ENCODE measurements at regions of chr2 and their contacts with region 1.

Region 1: DNA sequence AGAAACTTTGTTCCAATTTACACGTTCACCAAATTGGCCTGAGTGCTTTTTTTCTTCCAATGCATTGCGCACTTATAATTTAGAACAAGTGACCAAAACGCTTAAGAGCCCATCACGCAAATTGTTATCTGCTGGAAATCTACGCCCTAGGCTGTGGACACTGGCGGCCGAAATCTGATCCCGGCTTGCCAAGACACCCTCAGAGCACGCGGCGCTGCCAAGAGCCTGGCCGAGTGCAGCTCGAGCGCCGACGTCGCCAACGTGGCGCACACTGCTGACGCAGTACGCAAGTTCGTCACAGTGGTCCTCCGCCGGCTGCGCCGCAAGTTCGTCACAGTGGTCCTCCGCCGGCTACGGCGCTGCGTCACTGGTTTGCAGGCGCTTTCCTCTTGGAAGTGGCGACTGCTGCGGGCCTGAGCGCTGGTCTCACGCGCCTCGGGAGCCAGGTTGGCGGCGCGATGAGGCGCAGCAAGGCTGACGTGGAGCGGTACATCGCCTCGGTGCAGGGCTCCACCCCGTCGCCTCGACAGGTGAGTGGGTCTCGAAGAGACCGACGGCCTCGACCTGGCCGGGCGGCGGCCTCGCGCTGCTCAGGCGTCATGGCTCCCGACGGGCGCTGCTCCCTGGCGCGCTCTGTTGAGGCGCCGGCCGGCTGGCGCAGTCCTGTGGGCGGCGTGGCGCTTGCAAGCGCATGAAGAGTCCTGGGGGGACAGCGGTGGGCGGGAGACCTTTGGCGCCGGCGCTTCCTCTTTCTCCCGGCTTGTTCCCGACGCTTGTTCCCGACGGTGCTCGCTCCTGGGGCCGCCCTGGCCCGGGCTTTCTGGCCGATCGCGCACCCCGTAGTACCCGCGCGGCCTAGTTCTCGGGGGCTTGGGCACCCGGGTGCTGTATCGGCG is at the start of gene RANBP2:
- DNase-seq: peak; percentile 84 to 99 (median 92)
- ATAC-seq: peak; percentile 88
- H3K4me3 ChIP-seq: peak within 1 kb of the TSS; percentile 69
- H3K4me3 Mint-ChIP-seq: peak within 1 kb of the TSS; percentile 98
- H3K27ac ChIP-seq: peak within 1 kb of the TSS; percentile 87 to 88
- H3K27ac Mint-ChIP-seq: peak within 1 kb of the TSS; percentile 98
- H3K4me1 ChIP-seq: peaks cover 22% of the 10 kb centered on the region
- H3K4me1 Mint-ChIP-seq: peaks cover 26% of the 10 kb centered on the region
- H3K27me3 ChIP-seq: no peaks in the 10 kb centered on the region
- H3K27me3 Mint-ChIP-seq: no peaks in the 10 kb centered on the region
- CTCF ChIP-seq: no peak
- total RNA-seq, gene RANBP2: 182 to 186 TPM

Region 2: GRCh38 chr2:108448678-108449493 is 270.5 kb before region 1 on chr2 and contains the start of gene GCC2:
- CTCF ChIA-PET with region 1: no interaction called
- POLR2A ChIA-PET with region 1: interaction called, 5 read pairs
- intact Hi-C with region 1: loop called in 1 of 2 experiments (anchors 5 kb)
- DNase-seq: peak; percentile 94 to 98 (median 96)
- ATAC-seq: peak; percentile 93
- H3K4me3 ChIP-seq: peak within 1 kb of the TSS; percentile 88
- H3K4me3 Mint-ChIP-seq: peak within 1 kb of the TSS; percentile 97
- H3K27ac ChIP-seq: peak within 1 kb of the TSS; percentile 88 to 97
- H3K27ac Mint-ChIP-seq: peak within 1 kb of the TSS; percentile 97
- H3K4me1 ChIP-seq: peaks cover 24% of the 10 kb centered on the region
- H3K4me1 Mint-ChIP-seq: peaks cover 50% of the 10 kb centered on the region
- H3K27me3 ChIP-seq: no peaks in the 10 kb centered on the region
- H3K27me3 Mint-ChIP-seq: no peaks in the 10 kb centered on the region
- CTCF ChIP-seq: no peak
- total RNA-seq, gene GCC2: 134 to 141 TPM

Region 3: GRCh38 chr2:108594132-108594981 is 125.0 kb before region 1 on chr2:
- CTCF ChIA-PET with region 1: no interaction called
- POLR2A ChIA-PET with region 1: no interaction called
- intact Hi-C with region 1: loop called in 1 of 2 experiments (anchors 5 kb)
- DNase-seq: peak in 2 of 14 experiments; percentile 56 to 64
- ATAC-seq: no peak
- H3K4me3 ChIP-seq: no peak overlapping the region
- H3K4me3 Mint-ChIP-seq: no peak overlapping the region
- H3K27ac ChIP-seq: no peak overlapping the region
- H3K27ac Mint-ChIP-seq: no peak overlapping the region
- H3K4me1 ChIP-seq: peaks cover 5% of the 10 kb centered on the region
- H3K4me1 Mint-ChIP-seq: peaks cover 26% of the 10 kb centered on the region
- H3K27me3 ChIP-seq: no peaks in the 10 kb centered on the region
- H3K27me3 Mint-ChIP-seq: no peaks in the 10 kb centered on the region
- CTCF ChIP-seq: no peak

Region 4: DNA sequence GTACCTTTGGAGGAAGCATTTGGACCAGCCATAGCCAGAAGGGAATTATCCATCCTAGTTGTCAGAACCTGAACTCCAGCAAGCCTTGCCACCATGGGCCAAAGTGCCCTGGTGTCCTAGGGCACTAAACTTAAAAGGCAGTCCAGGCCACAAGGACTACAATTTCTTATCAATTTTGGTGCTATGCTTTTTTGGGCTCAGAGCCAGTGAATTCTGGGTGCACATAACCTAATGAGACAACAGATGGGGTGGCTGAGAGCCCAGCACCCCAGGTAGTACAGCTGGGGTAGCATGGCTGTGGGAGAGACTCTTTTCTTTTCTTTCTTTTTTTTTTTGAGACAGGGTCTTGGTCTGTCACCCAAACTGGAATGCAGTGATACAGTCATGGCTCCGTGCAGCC is 14.5 kb before region 1 on chr2:
- CTCF ChIA-PET with region 1: no interaction called
- POLR2A ChIA-PET with region 1: no interaction called
- intact Hi-C with region 1: no loop called
- DNase-seq: no peak
- ATAC-seq: no peak
- H3K4me3 ChIP-seq: no peak overlapping the region
- H3K4me3 Mint-ChIP-seq: no peak overlapping the region
- H3K27ac ChIP-seq: no peak overlapping the region
- H3K27ac Mint-ChIP-seq: no peak overlapping the region
- H3K4me1 ChIP-seq: no peaks in the 10 kb centered on the region
- H3K4me1 Mint-ChIP-seq: no peaks in the 10 kb centered on the region
- H3K27me3 ChIP-seq: no peaks in the 10 kb centered on the region
- H3K27me3 Mint-ChIP-seq: no peaks in the 10 kb centered on the region
- CTCF ChIP-seq: no peak

Region 5: DNA sequence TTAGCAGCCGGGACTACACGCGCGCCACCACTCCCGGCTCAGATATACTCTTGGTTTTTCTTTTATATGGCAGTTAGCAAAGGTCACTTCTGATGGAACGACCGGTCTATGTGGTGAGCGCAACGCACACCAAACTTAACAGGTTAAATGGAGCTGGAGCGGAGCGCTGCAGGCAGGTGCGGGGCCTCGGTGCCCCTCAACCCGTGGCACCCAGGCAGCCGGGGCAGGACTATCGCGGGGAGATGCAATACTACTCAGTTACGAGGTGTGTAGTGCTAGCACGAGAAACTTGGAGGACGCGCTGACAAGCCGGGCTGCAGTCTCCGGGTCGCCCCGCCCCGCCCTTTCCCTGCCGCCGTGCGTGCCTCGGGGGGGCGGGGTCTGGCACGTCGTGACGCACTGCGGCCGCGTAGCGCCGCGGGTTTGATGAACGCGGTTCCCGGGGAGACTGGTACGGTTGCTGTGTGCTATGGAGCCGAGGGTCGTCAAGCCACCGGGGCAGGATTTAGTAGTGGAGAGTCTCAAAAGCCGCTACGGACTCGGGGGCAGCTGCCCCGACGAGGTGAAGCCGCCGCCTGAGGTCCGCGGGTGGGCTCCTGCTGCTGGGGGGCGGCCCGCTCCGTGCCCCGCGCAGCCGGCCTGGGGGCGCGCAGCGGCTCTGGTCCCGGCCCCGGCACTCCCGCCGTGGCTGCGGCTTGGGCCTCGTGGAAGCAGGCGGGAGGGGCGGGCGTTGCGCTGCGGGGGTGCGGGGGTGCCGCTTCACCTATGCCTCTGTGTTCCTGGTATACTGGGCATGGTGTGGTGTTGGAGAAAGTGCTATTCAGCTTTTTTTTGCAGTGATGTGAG is 67.2 kb after region 1 on chr2 and contains the start of gene CCDC138:
- CTCF ChIA-PET with region 1: no interaction called
- POLR2A ChIA-PET with region 1: no interaction called
- intact Hi-C with region 1: loop called (anchors 2 kb)
- DNase-seq: peak; percentile 83 to 96 (median 90)
- ATAC-seq: peak; percentile 95
- H3K4me3 ChIP-seq: peak within 1 kb of the TSS; percentile 78
- H3K4me3 Mint-ChIP-seq: peak within 1 kb of the TSS; percentile 99
- H3K27ac ChIP-seq: peak within 1 kb of the TSS; percentile 33 to 63
- H3K27ac Mint-ChIP-seq: peak within 1 kb of the TSS; percentile 92
- H3K4me1 ChIP-seq: peaks cover 8% of the 10 kb centered on the region
- H3K4me1 Mint-ChIP-seq: peaks cover 22% of the 10 kb centered on the region
- H3K27me3 ChIP-seq: no peaks in the 10 kb centered on the region
- H3K27me3 Mint-ChIP-seq: no peaks in the 10 kb centered on the region
- CTCF ChIP-seq: no peak
- total RNA-seq, gene CCDC138: 4.7 to 5.8 TPM

Region 6: DNA sequence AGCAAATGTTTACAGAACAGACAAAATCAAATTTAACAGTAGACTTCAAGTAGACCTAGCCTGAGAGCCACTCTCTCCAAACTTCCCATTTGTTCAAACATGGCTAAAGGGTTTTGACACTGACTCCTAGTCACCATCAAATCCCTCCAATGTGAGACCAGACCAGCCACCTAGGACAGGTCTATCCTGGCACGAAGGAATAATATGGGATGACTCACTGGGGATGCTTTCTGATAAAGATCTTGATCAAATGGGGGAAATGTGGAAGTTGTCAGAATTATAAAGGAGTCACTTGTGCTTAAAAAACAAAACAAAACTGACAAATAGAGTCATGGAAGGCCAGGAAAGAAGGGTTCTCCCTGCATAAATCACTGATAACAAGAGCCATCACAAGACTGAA is 173.9 kb after region 1 on chr2:
- CTCF ChIA-PET with region 1: no interaction called
- POLR2A ChIA-PET with region 1: no interaction called
- intact Hi-C with region 1: no loop called
- DNase-seq: no peak
- ATAC-seq: no peak
- H3K4me3 ChIP-seq: no peak overlapping the region
- H3K4me3 Mint-ChIP-seq: no peak overlapping the region
- H3K27ac ChIP-seq: no peak overlapping the region
- H3K27ac Mint-ChIP-seq: no peak overlapping the region
- H3K4me1 ChIP-seq: no peaks in the 10 kb centered on the region
- H3K4me1 Mint-ChIP-seq: no peaks in the 10 kb centered on the region
- H3K27me3 ChIP-seq: no peaks in the 10 kb centered on the region
- H3K27me3 Mint-ChIP-seq: no peaks in the 10 kb centered on the region
- CTCF ChIP-seq: no peak

Region 7: GRCh38 chr2:109510136-109511028 is 791.0 kb after region 1 on chr2:
- CTCF ChIA-PET with region 1: no interaction called
- POLR2A ChIA-PET with region 1: no interaction called
- intact Hi-C with region 1: no loop called
- DNase-seq: peak; percentile 66 to 85 (median 72)
- ATAC-seq: peak; percentile 95
- H3K4me3 ChIP-seq: no peak overlapping the region
- H3K4me3 Mint-ChIP-seq: no peak overlapping the region
- H3K27ac ChIP-seq: no peak overlapping the region
- H3K27ac Mint-ChIP-seq: no peak overlapping the region
- H3K4me1 ChIP-seq: peaks cover 7% of the 10 kb centered on the region
- H3K4me1 Mint-ChIP-seq: no peaks in the 10 kb centered on the region
- H3K27me3 ChIP-seq: peaks cover 0 to 3% of the 10 kb centered on the region in 2 experiments
- H3K27me3 Mint-ChIP-seq: no peaks in the 10 kb centered on the region
- CTCF ChIP-seq: peak; percentile 82

Region 8: DNA sequence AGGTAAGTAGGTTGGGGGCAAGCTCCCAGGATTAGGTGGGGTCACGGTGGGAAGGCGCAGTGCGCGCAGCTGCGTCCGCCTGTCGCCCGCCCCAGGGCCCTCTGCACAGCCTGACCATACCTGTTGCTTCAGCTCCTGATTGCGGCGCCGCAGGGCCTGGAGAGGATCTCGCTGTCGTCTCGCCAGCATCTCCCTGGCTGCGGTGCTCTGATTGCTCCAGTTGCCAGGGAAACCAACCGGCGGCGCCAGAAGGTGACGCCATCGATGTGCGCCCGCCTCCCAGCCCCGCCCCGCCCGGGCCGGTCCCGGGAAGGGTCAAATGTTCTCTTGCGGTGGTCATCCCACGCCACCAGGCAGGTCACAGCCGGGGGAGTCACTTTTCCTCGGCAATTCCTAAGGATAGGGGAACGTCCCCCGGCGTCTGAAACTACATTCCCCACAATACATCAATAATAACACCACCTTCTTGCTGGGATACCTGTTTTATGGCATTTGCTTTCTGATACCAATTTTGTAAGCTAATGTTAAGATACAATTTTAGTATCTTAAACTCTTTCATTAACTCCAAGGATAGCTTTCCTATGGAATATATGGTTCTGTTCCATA is 1485.5 kb after region 1 on chr2 and contains the start of gene NPHP1:
- CTCF ChIA-PET with region 1: no interaction called
- POLR2A ChIA-PET with region 1: no interaction called
- intact Hi-C with region 1: loop called in 1 of 2 experiments (anchors 5 kb)
- DNase-seq: peak; percentile 62 to 92 (median 78)
- ATAC-seq: peak; percentile 93
- H3K4me3 ChIP-seq: peak within 1 kb of the TSS; percentile 69
- H3K4me3 Mint-ChIP-seq: peak within 1 kb of the TSS; percentile 93
- H3K27ac ChIP-seq: peak within 1 kb of the TSS in 1 of 2 donors; percentile 31
- H3K27ac Mint-ChIP-seq: peak within 1 kb of the TSS; percentile 78
- H3K4me1 ChIP-seq: peaks cover 5% of the 10 kb centered on the region
- H3K4me1 Mint-ChIP-seq: peaks cover 34% of the 10 kb centered on the region
- H3K27me3 ChIP-seq: no peaks in the 10 kb centered on the region
- H3K27me3 Mint-ChIP-seq: no peaks in the 10 kb centered on the region
- CTCF ChIP-seq: no peak
- total RNA-seq, gene NPHP1: 0.33 to 0.98 TPM